ENCODE measurements at regions of chr3 and their contacts with region 1.

Region 1: DNA sequence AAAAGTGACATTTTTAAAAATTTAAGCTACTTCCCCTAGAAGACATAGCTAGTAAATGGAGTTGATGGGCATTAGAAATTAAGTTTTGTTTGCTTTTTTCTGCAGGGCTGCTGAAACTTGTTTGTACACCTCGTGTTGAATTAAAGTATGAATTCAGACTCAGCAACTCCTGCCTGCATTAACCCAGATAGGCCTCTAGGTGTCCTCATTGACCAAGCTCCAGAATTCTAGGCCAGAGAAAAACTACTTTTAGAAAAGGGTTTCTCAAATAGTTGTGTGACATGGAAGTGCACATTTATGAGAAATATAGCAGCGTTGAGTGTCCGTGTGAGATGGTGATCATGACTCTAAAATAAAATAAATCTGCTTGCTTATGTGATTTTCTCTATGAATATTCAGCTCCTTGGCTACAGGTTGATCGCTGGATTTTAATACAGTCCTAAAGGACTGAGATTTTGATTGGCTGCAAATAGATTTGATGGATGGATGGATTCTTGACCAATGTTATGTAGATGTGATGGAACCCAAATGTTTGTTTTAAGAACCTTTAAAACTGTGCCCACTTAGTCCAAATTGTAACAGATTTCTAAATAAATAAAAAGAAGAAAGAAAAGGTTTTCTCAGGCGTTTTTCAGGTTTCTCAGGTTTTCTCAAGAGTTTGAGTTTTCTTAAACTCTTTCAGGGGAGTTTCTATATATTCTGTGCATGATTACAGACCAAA is 39.4 kb upstream of the LMOD3 start:
- DNase-seq: peak; percentile 25
- ATAC-seq: peak; percentile 83
- H3K4me3 ChIP-seq: no peak overlapping the region
- H3K27ac ChIP-seq: no peak overlapping the region
- H3K4me1 ChIP-seq: no peaks in the 10 kb centered on the region
- H3K27me3 ChIP-seq: no peaks in the 10 kb centered on the region
- CTCF ChIP-seq: peak; percentile 89 to 95 (median 94); a peak in 5 of 6 replicates
- EP300 ChIP-seq: no peak
- POLR2A ChIP-seq: no peak
- RAD21 ChIP-seq: peak; percentile 100

Region 2: DNA sequence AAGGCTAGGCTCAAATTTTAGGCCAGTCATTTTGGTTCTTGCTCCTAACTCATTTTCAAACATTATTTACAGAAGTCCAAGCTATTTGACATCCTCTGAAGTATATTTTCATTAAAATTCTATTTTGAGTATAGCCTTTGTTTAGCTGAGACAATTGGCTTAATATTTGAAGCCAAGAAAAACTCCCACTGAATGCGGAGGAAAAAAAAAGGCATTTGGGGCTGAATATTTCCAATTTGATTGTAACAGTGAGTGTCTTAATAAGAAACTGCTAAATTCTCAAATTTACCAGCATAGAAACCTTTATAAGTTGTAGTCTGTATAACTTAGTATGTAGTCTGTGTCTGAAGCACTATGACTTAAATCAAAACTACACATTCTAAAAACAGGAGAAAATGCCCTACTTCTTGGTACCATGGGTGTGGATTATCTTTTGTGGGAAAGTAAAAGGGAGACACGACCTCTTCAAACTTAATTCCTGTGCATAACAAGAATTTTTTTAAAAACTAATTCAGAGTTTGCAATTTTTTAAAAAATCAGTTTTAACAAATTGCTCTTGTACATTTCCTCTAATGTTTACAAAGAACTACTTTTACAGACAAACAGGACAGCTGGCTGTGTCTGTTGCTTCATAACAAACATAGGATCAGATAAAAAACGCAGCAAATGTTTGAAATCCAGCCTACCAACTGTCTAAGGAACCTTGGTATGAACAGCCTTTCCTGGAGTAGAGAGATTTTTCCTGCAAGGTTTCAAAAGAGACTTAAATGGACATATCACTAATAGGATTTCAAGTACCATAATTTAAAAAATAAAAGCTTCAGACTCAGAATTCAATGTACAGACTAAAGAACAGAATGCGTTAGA is 13.4 kb after region 1 on chr3:
- CTCF ChIA-PET with region 1: interaction called, 54 read pairs
- POLR2A ChIA-PET with region 1: no interaction called
- RAD21 ChIA-PET with region 1: interaction called, 8 read pairs
- SMC1A ChIA-PET with region 1: interaction called, 28 read pairs
- in situ Hi-C with region 1: no loop called
- intact Hi-C with region 1: no loop called
- DNase-seq: no peak
- ATAC-seq: no peak
- H3K4me3 ChIP-seq: no peak overlapping the region
- H3K27ac ChIP-seq: no peak overlapping the region
- H3K4me1 ChIP-seq: no peaks in the 10 kb centered on the region
- H3K27me3 ChIP-seq: no peaks in the 10 kb centered on the region
- CTCF ChIP-seq: no peak
- EP300 ChIP-seq: no peak
- POLR2A ChIP-seq: no peak
- RAD21 ChIP-seq: no peak

Region 3: DNA sequence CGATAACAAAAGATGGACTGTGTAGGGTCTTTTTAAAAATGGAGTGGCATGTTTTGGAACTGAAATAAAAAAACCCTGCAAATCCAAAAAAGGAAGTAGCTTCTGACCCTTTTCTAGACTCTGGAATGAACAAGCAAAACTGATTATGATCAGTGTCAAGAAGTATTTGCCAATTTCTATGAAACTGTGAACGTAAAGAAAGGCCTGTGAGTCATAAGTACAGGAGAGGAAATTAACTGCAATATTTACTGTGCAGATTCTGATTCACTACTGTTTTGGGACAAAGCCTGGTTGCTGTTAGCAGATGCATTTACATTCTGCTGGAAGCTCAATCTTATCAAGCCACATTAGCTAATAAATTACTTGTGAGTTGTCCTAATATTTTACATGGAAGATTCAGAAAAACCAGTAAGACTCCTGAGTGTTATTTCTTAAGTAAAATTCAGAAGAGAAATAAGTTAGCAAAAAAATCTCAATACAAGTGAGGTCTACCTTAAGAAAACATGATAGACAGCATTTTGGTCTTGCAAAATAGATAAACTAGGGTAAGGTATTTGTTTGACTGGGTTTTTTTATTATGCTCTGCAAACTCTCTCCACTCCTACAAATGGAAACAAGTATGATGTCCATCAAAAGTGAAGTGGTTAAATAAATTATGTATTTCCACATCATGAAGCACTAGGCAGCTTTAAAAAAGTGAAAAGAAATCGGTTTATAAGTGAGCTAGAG is 50.8 kb after region 1 on chr3:
- CTCF ChIA-PET with region 1: interaction called, 10 read pairs
- POLR2A ChIA-PET with region 1: no interaction called
- RAD21 ChIA-PET with region 1: interaction called, 4 read pairs
- SMC1A ChIA-PET with region 1: interaction called, 16 read pairs
- in situ Hi-C with region 1: no loop called
- intact Hi-C with region 1: no loop called
- DNase-seq: no peak
- ATAC-seq: peak; percentile 92
- H3K4me3 ChIP-seq: no peak overlapping the region
- H3K27ac ChIP-seq: no peak overlapping the region
- H3K4me1 ChIP-seq: no peaks in the 10 kb centered on the region
- H3K27me3 ChIP-seq: no peaks in the 10 kb centered on the region
- CTCF ChIP-seq: no peak
- EP300 ChIP-seq: peak; percentile 24 to 27; a peak in 1 of 4 replicates
- POLR2A ChIP-seq: no peak
- RAD21 ChIP-seq: no peak

Region 4: DNA sequence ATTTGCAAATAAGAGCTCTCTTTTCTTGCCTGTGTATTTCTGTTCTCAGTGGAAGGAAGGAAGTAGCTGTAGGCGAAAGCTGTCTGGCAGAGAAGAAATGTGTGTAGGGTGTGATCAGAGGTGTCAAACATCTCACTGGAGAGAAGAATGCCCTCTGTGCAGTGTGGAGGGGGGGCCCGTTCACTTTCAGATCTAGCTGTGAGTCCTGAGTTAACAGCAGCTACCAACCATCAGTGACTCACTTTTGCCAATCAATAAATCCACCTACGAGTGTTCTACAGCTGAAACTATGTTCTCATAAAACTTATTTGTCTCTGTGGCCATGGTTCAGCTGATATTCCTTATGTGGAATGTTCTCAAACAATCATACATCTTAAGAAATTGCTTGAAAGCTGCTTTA is 120.4 kb after region 1 on chr3:
- CTCF ChIA-PET with region 1: interaction called, 10 read pairs
- POLR2A ChIA-PET with region 1: no interaction called
- RAD21 ChIA-PET with region 1: interaction called, 8 read pairs
- SMC1A ChIA-PET with region 1: interaction called, 37 read pairs
- in situ Hi-C with region 1: no loop called
- intact Hi-C with region 1: no loop called
- DNase-seq: no peak
- ATAC-seq: peak; percentile 96
- H3K4me3 ChIP-seq: no peak overlapping the region
- H3K27ac ChIP-seq: no peak overlapping the region
- H3K4me1 ChIP-seq: no peaks in the 10 kb centered on the region
- H3K27me3 ChIP-seq: no peaks in the 10 kb centered on the region
- CTCF ChIP-seq: no peak
- EP300 ChIP-seq: no peak; a peak in 1 of 4 replicates
- POLR2A ChIP-seq: no peak
- RAD21 ChIP-seq: no peak

Region 5: DNA sequence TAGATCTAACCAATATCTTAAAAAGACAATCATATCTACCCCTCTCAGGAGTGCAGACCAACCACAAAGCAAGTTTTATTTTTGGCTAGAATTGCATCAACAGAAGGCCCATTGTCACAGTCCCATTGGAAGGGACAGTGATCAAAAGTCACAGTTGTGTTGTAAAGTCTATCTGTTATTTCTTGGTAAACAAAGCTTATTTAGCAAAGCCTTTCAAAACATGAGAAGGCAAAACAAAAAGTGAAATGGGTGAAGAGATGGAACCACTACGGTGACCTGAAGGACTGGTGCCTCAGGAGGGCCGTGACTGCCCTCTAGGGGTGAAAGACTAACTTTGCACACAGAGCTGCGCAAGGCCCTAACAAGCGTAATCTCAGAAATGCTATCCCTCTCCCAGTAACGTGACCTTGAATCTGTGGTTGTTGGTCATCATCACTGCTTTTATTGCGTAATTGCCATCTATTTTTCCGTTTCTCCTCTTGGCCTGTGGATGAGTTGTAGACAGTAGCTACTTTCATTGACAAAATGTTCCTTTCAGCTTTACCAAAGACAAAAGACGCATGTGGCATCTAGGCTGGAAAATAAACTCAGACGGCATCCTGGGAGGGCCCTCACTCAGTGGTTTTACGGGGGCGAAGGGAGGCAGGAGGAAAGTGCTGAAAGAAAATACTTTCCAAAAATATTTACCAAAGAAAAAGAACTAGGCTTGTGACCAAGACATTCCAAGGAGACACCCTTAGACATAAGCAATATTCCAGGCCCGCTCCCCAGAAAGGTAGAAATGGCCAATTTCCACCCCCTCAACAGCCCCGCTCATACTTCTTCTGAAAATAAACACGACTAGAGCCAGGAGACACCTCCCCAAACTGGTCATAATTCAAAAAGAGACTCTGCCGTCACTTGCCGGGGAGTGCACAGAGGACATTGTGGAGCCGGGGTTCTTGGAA is 144.8 kb after region 1 on chr3:
- CTCF ChIA-PET with region 1: interaction called, 625 read pairs
- POLR2A ChIA-PET with region 1: interaction called, 7 read pairs
- RAD21 ChIA-PET with region 1: interaction called, 379 read pairs
- SMC1A ChIA-PET with region 1: interaction called, 505 read pairs
- in situ Hi-C with region 1: loop called (anchors 5 kb)
- intact Hi-C with region 1: loop called (anchors 1 kb)
- DNase-seq: no peak
- ATAC-seq: peak; percentile 98
- H3K4me3 ChIP-seq: no peak overlapping the region
- H3K27ac ChIP-seq: no peak overlapping the region
- H3K4me1 ChIP-seq: no peaks in the 10 kb centered on the region
- H3K27me3 ChIP-seq: no peaks in the 10 kb centered on the region
- CTCF ChIP-seq: peak; percentile 91 to 96 (median 94)
- EP300 ChIP-seq: no peak
- POLR2A ChIP-seq: no peak
- RAD21 ChIP-seq: peak; percentile 98

Region 6: DNA sequence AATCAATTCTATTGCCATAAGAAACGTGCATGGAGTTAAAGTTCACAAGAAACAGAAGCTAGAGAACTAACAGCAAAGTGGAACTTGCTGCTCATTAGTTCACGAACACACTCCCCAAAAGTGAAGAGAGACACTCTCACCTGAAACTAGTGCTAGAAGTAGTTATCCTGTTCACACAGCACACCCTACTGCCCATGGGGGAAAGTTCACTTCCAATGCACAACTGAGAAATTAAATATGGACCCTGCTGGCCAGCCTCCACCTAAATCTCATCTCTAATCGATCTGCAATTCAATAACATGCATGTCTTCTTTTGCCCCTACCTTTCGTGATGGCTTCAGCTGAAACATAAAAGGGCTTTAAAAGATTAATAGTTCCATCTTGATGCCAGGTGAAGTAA is 263.5 kb after region 1 on chr3:
- CTCF ChIA-PET with region 1: interaction called, 138 read pairs
- POLR2A ChIA-PET with region 1: interaction called, 7 read pairs
- RAD21 ChIA-PET with region 1: interaction called, 47 read pairs
- SMC1A ChIA-PET with region 1: interaction called, 100 read pairs
- in situ Hi-C with region 1: loop called (anchors 5 kb)
- intact Hi-C with region 1: loop called (anchors 1 kb)
- DNase-seq: no peak
- ATAC-seq: peak; percentile 92
- H3K4me3 ChIP-seq: no peak overlapping the region
- H3K27ac ChIP-seq: no peak overlapping the region
- H3K4me1 ChIP-seq: no peaks in the 10 kb centered on the region
- H3K27me3 ChIP-seq: no peaks in the 10 kb centered on the region
- CTCF ChIP-seq: peak; percentile 67 to 72 (median 68)
- EP300 ChIP-seq: no peak
- POLR2A ChIP-seq: no peak
- RAD21 ChIP-seq: peak; percentile 78

Measured in GM12878 (cell line).